PC-3 (cell line): ENCODE measurements at regions of chr14 and their contacts with region 1.

Region 1: DNA sequence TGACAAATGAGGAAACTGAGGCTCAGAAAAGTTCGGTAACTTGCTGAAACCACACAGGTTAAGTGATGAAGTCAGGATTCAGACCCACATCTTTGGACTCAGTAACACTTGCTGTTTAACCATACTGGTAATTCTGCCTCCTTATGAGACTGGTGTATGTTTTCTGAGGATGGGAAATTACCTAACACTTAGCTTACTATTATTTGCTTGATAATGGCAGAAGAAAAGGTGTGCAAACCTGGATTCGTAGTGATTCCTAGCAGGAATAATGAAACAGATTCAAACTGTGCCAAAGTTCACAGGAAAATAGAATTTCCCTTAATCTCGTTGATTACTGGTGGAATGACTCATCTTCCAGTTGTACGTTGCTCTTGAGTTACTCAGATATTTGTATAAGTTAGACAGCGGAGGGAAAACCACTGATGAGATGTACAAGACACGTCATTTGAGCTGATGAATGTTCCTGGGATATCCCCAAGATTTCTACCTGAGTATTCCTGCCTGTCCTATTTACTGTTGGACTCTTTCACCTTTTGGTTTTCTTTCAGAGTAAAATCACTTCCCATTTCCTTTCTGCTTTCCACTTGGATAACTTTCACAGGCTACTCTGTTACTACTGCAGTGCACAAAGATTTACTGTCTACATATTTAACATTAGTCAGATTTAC is 37.5 kb downstream of the PRORP start:
- DNase-seq: peak; percentile 97
- ATAC-seq: peak; percentile 99
- H3K4me3 ChIP-seq: peak overlapping the region; percentile 49
- H3K27ac ChIP-seq: peak overlapping the region; percentile 95
- H3K4me1 ChIP-seq: peaks cover 42% of the 10 kb centered on the region
- H3K27me3 ChIP-seq: no peaks in the 10 kb centered on the region
- CTCF ChIP-seq: no peak

Region 2: GRCh38 chr14:35197015-35197414 is 37.1 kb after region 1 on chr14:
- CTCF ChIA-PET with region 1: no interaction called
- POLR2A ChIA-PET with region 1: interaction called, 6 read pairs
- intact Hi-C with region 1: loop called (anchors 5 kb)
- DNase-seq: peak; percentile 41
- ATAC-seq: peak; percentile 80
- H3K4me3 ChIP-seq: no peak overlapping the region
- H3K27ac ChIP-seq: peak overlapping the region; percentile 27
- H3K4me1 ChIP-seq: peaks cover 11% of the 10 kb centered on the region
- H3K27me3 ChIP-seq: no peaks in the 10 kb centered on the region
- CTCF ChIP-seq: no peak

Region 3: DNA sequence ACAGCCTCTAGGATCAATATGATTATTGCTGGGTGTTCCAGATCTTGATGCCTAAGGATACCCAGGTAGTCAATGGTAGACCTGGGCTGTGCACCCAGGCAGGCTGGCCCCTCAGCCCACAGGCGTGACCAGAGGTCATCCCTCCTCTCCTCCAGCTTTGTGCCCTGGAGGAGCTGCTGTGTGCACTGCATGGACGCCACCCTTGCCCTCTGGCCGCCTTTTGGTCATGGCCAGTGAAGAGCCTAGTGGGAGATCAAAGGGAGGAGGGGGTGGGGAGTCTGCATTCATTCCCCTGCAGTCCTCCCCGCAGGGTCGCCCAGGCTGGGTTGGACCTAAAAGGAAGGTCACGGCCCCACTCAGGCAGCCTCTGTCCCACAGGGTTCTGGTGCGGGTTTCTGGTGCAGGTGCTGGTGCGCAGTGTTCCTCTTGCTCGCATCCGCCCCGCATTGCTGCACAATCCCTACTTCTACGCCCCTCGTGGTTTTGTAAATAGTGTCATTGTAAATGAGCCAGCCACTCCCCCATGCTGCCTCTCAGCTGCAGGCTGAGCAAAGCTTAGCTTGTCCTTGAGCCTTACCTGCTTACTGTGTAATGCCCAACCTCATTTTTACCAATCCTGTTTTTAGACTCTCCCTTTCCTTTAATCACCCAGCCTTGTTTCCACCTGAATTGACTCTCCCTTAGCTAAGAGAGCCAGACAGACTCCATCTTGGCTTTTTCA is 187.6 kb after region 1 on chr14:
- CTCF ChIA-PET with region 1: no interaction called
- POLR2A ChIA-PET with region 1: no interaction called
- intact Hi-C with region 1: no loop called
- DNase-seq: no peak
- ATAC-seq: peak; percentile 45; the same call in 1 of the 2 replicates
- H3K4me3 ChIP-seq: no peak overlapping the region
- H3K27ac ChIP-seq: no peak overlapping the region
- H3K4me1 ChIP-seq: no peaks in the 10 kb centered on the region
- H3K27me3 ChIP-seq: no peaks in the 10 kb centered on the region
- CTCF ChIP-seq: no peak